Calu3 (cell line): ENCODE measurements at regions of chr3 and their contacts with region 1.

Region 1: DNA sequence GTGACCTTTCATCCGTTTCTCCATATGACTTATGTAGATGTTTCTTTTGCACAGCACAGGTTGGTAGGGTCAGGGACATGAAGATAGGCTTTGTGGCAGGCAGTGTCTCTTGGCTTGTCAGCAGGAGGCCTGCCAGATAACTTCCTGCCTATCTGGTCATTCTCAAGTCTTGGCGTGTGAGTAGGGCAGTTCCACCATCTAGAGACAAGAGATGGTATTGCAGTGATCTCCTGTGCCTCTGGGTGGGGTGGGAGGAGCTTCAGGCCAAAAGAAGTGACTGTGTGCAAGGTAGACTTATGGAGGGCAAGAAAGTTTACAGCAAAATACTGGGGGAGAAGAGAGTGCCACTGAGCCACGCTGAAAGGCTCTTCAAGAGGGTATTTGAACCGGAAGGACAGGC is 11.0 kb downstream of the TEX264 start:
- DNase-seq: peak; percentile 67
- H3K4me3 Mint-ChIP-seq: no peak overlapping the region
- H3K27ac Mint-ChIP-seq: no peak overlapping the region
- H3K4me1 Mint-ChIP-seq: peaks cover 19% of the 10 kb centered on the region
- H3K27me3 Mint-ChIP-seq: no peaks in the 10 kb centered on the region
- CTCF ChIP-seq: peak; percentile 54

Region 2: GRCh38 chr3:51670823-51671733 is 11.0 kb before region 1 on chr3 and contains the start of gene TEX264:
- CTCF ChIA-PET with region 1: interaction called, 20 read pairs
- intact Hi-C with region 1: no loop called
- DNase-seq: peak; percentile 89
- H3K4me3 Mint-ChIP-seq: peak within 1 kb of the TSS; percentile 97
- H3K27ac Mint-ChIP-seq: peak within 1 kb of the TSS; percentile 76
- H3K4me1 Mint-ChIP-seq: peaks cover 26% of the 10 kb centered on the region
- H3K27me3 Mint-ChIP-seq: no peaks in the 10 kb centered on the region
- CTCF ChIP-seq: no peak
- total RNA-seq, gene TEX264: 37.0 and 44.9 TPM in 2 replicates

Region 3: DNA sequence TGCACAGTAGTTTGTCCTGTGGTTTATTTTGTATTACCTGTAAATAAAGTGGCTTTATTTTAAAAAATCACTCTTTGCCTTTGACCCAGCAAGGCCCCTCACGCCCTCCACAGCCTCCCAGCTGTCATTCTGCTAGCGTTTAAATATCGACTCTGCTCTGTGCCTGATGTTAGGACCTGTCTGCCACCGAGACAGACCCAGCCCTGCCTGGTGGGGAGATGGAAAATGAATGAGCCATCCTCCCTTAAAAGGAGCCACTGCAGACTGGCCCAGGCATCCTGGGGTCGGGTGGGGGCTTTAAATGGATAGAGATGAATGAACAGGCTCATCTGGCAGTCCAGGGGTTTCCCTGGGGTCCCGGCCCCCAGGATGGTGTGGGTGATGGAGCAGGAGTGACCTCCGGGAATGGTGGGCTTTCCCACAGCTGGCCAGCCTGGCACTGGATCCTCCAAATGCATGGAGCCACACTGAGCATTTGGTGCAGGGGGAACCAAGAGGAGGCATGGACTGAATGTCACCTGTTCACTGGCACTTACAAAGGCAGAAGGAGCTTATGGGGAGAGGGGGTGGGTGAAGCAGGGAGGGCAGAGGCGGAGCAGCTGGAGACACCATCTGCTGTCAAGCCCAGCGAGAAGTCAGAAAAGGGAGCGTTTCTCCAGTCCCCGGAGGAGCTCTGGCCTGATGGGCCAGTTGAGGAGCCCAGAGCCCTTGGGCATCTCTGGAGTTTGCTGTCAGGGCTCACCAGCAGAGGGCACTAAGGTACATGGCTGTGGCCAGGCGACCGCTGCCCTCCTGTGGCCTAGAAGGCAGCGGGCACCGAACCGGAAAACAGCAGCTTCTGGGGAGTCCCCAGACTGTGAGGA is 36.7 kb after region 1 on chr3:
- CTCF ChIA-PET with region 1: no interaction called
- intact Hi-C with region 1: no loop called
- DNase-seq: peak; percentile 84
- H3K4me3 Mint-ChIP-seq: no peak overlapping the region
- H3K27ac Mint-ChIP-seq: no peak overlapping the region
- H3K4me1 Mint-ChIP-seq: no peaks in the 10 kb centered on the region
- H3K27me3 Mint-ChIP-seq: peaks cover 21% of the 10 kb centered on the region
- CTCF ChIP-seq: peak; percentile 92